PC-3 (cell line): ENCODE measurements at regions of chr13 and their contacts with region 1.

Region 1: GRCh38 chr13:40728595-40728994 is 42.4 kb downstream of the MRPS31 start:
- DNase-seq: no peak
- ATAC-seq: no peak
- H3K4me3 ChIP-seq: no peak overlapping the region
- H3K27ac ChIP-seq: no peak overlapping the region
- H3K4me1 ChIP-seq: no peaks in the 10 kb centered on the region
- H3K27me3 ChIP-seq: no peaks in the 10 kb centered on the region
- CTCF ChIP-seq: no peak

Region 2: DNA sequence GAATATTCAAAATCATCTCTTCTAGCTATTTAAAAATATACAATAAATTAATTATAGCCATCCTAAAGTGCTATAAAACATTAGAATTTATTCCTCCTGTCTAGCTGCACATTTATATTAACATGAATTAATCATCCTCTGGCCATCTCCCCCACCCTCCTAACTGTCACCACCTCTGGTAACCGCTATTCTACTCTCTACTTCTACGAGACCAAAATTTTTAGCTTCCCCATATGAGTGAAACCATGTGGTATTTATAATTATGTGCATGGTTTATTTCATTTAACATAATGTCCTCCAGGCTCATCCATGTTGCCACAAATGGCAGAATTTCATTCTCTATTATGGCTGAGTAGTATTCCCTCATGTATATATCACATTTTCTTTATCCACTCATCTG is 808.0 kb before region 1 on chr13:
- CTCF ChIA-PET with region 1: no interaction called
- POLR2A ChIA-PET with region 1: interaction called, 15 read pairs
- intact Hi-C with region 1: no loop called
- DNase-seq: no peak
- ATAC-seq: no peak
- H3K4me3 ChIP-seq: no peak overlapping the region
- H3K27ac ChIP-seq: no peak overlapping the region
- H3K4me1 ChIP-seq: no peaks in the 10 kb centered on the region
- H3K27me3 ChIP-seq: no peaks in the 10 kb centered on the region
- CTCF ChIP-seq: no peak

Region 3: DNA sequence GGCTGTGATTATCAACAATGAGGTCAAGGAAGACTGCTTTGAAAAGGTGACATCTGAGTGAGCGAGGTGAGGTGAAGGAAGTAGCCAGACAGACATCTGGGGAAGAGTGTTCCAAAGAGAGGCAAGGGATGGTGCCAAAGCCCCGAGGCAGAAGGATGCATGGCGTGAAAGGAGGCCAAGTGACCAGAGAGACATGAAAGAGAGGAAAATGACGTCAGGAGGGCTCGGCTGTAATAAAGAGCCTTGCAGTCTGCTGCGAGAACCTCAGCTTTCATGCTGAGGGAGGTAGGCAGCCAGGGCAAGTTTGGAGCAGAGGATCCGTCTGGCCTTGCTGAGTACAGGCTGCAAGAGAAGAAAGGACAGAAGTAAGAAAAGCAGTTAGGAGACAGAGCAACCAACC is 113.0 kb before region 1 on chr13:
- CTCF ChIA-PET with region 1: no interaction called
- POLR2A ChIA-PET with region 1: no interaction called
- intact Hi-C with region 1: no loop called
- DNase-seq: no peak
- ATAC-seq: no peak
- H3K4me3 ChIP-seq: no peak overlapping the region
- H3K27ac ChIP-seq: no peak overlapping the region
- H3K4me1 ChIP-seq: peaks cover 11% of the 10 kb centered on the region
- H3K27me3 ChIP-seq: no peaks in the 10 kb centered on the region
- CTCF ChIP-seq: no peak

Region 4: DNA sequence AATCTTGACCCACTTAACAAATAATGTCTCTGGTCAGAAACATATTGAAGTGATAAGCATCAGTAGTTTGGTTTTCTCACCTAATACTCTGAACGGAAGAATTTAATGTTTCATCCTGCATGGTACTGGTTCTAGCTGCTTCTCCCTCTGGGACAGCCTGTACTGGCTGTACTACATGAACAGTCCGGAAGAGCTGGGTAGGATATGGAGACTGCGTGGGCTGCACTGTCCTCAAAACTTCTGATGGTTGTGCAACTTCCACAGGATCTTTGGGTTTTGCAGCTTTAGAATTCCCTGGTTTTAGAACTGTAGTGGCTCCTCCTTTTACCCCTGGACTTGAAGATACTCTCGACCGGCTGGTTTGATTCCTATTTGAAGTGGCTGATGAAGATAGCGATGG is 212.2 kb after region 1 on chr13:
- CTCF ChIA-PET with region 1: no interaction called
- POLR2A ChIA-PET with region 1: no interaction called
- intact Hi-C with region 1: no loop called
- DNase-seq: no peak
- ATAC-seq: no peak
- H3K4me3 ChIP-seq: no peak overlapping the region
- H3K27ac ChIP-seq: no peak overlapping the region
- H3K4me1 ChIP-seq: no peaks in the 10 kb centered on the region
- H3K27me3 ChIP-seq: no peaks in the 10 kb centered on the region
- CTCF ChIP-seq: no peak